ENCODE measurements at regions of chr12 and their contacts with region 1.

Region 1: GRCh38 chr12:64451687-64452558 is at the start of gene TBK1:
- DNase-seq: peak; percentile 91
- H3K4me3 ChIP-seq: peak within 1 kb of the TSS; percentile 79 to 99 (median 88)
- H3K27ac ChIP-seq: peak within 1 kb of the TSS; percentile 96 to 98 (median 96)
- H3K4me1 ChIP-seq: peaks cover 2 to 27% (median 11%) of the 10 kb centered on the region in 4 donors
- H3K27me3 ChIP-seq: no peaks in the 10 kb centered on the region
- CTCF ChIP-seq: peak in 1 of 5 experiments; percentile 24
- EP300 ChIP-seq: no peak
- POLR2A ChIP-seq: peak; percentile 63
- total RNA-seq, gene TBK1: 6.4 to 25.9 (median 17.1) TPM

Region 2: DNA sequence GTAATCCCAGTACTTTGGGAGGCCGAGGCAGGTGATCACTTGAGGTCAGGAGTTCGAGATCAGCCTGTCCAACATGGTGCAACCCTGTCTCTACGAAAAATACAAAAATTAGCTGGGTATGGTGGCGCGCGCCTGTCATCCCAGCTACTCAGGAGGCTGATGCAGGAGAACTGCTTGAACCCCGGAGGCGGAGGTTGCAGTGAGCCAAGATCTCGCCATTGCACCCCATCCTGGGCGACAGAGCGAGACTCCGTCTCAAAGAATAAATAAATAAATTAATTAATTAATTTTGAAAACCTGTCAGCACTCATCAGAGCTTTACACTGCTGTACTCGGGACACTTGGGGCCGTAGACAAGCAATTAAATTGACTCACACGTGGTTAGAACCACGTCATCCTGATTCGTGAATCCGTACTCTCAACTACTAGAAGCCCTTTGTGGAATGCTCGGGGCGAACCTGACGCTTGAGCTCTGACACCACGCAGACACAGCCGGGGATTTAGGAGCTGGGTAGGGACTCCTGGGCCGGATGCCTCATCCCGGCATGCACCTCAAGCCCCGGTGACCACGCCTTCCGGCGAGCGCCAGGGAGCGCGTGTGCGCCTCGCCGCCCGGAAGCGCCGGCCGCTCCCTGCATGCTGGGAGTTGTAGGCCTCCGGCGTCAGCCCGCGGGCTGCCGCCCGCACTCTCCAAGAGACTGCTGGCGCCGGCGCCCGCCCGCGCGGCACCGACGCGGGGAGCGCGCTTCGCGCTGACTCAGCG is 48.0 kb before region 1 on chr12 and contains the start of gene XPOT:
- in situ Hi-C with region 1: no loop called
- intact Hi-C with region 1: loop called (anchors 2 kb)
- DNase-seq: peak; percentile 95
- H3K4me3 ChIP-seq: peak within 1 kb of the TSS; percentile 57 to 92 (median 84)
- H3K27ac ChIP-seq: peak within 1 kb of the TSS; percentile 94 to 100 (median 96)
- H3K4me1 ChIP-seq: peaks cover 0 to 13% (median 9%) of the 10 kb centered on the region in 4 donors
- H3K27me3 ChIP-seq: no peaks in the 10 kb centered on the region
- CTCF ChIP-seq: no peak
- EP300 ChIP-seq: no peak
- POLR2A ChIP-seq: no peak
- total RNA-seq, gene XPOT: 15.7 to 56.9 (median 27.0) TPM